Endothelial cell of umbilical vein (primary cell): ENCODE measurements at regions of chr1 and their contacts with region 1.

Region 1: GRCh38 chr1:220776720-220777326 is 9.9 kb upstream of the MTARC1 start:
- DNase-seq: peak; percentile 68
- H3K4me3 ChIP-seq: no peak overlapping the region
- H3K27ac ChIP-seq: no peak overlapping the region
- H3K4me1 ChIP-seq: no peaks in the 10 kb centered on the region
- H3K27me3 ChIP-seq: no peaks in the 10 kb centered on the region
- CTCF ChIP-seq: peak; percentile 91 to 94
- POLR2A ChIP-seq: no peak

Region 2: GRCh38 chr1:219990782-219991510 is 785.9 kb before region 1 on chr1:
- CTCF ChIA-PET with region 1: interaction called, 6 read pairs
- POLR2A ChIA-PET with region 1: no interaction called
- dilution Hi-C with region 1: no loop called
- intact Hi-C with region 1: loop called (anchors 5 kb)
- DNase-seq: peak; percentile 58
- H3K4me3 ChIP-seq: no peak overlapping the region
- H3K27ac ChIP-seq: no peak overlapping the region
- H3K4me1 ChIP-seq: no peaks in the 10 kb centered on the region
- H3K27me3 ChIP-seq: no peaks in the 10 kb centered on the region
- CTCF ChIP-seq: peak; percentile 31 to 47
- POLR2A ChIP-seq: no peak

Region 3: GRCh38 chr1:220272047-220272840 is 504.6 kb before region 1 on chr1 and contains the start of gene RAB3GAP2:
- CTCF ChIA-PET with region 1: interaction called, 58 read pairs
- POLR2A ChIA-PET with region 1: no interaction called
- dilution Hi-C with region 1: no loop called
- intact Hi-C with region 1: loop called (anchors 2 kb)
- DNase-seq: peak; percentile 95
- H3K4me3 ChIP-seq: peak within 1 kb of the TSS; percentile 63 to 75 (median 63)
- H3K27ac ChIP-seq: peak within 1 kb of the TSS; percentile 72
- H3K4me1 ChIP-seq: peaks cover 14% of the 10 kb centered on the region
- H3K27me3 ChIP-seq: peaks cover 7 to 14% of the 10 kb centered on the region in 2 experiments
- CTCF ChIP-seq: no peak
- POLR2A ChIP-seq: peak; percentile 91
- total RNA-seq, gene RAB3GAP2: 37.0 and 37.4 TPM in 2 replicates

Region 4: DNA sequence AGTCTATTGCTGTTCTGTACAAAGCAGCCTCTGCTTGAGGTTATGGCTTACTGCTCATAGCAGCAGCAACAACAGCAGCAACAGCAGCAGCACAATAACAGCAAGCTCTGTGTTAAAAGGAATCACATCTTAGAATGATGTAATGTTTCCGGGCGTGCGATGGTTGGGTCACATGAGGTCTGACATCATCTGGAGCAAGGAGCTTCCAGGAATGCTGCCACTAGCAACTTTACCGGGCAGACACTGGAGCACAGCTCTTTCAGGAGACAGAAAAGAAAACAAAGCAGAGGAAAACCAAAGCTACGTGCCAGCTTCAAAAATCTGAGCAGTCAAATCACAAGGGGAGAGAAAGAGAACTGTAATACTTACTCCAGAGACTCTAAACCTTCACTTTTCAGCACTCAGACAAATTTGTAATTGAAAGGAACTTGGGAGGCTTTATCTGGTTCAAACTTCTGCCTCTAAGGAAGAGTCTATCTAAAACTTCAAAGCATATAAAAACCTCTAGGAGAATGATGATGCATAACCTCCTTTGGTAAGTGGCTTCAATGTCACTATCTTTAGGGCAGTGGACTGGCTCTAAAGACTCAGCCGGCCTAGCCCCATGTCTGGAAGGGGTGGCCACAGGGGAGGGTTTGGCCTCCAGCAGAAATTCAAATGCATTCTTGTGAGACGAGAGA is 476.2 kb before region 1 on chr1:
- CTCF ChIA-PET with region 1: interaction called, 64 read pairs
- POLR2A ChIA-PET with region 1: no interaction called
- dilution Hi-C with region 1: no loop called
- intact Hi-C with region 1: loop called (anchors 1 kb)
- DNase-seq: peak; percentile 95
- H3K4me3 ChIP-seq: no peak overlapping the region
- H3K27ac ChIP-seq: peak overlapping the region; percentile 82
- H3K4me1 ChIP-seq: peaks cover 12% of the 10 kb centered on the region
- H3K27me3 ChIP-seq: peaks cover 3 to 5% of the 10 kb centered on the region in 2 experiments
- CTCF ChIP-seq: no peak
- POLR2A ChIP-seq: no peak

Region 5: DNA sequence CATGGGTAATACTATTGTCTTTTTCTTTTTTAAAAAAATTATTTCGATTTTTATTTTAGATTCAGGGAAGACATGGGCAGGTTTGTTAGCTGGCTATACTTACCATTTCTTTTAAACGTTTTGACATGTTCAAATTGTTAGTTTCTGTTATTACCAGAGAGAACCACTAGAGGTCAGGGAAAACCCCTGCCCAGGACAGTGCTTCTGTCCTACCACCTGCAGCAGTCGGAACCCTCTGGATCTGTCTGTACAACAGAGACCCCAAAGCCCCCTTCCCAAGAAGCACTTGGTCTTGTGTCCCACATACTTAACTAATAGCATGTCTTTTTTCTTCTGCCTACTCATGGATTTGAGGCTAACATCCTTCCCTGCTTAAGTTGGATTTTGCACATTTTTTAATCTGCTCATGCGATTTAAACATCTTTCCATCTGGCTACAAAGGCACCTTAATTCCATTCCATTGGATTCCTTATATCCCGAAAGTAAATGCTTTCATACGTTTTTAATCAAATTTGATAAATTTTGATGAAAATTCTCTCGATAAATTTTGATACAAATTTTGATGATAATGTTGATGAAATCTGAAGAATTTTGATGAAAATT is 96.6 kb before region 1 on chr1:
- CTCF ChIA-PET with region 1: interaction called, 26 read pairs
- POLR2A ChIA-PET with region 1: no interaction called
- dilution Hi-C with region 1: no loop called
- intact Hi-C with region 1: loop called (anchors 1 kb)
- DNase-seq: peak; percentile 70
- H3K4me3 ChIP-seq: no peak overlapping the region
- H3K27ac ChIP-seq: no peak overlapping the region
- H3K4me1 ChIP-seq: no peaks in the 10 kb centered on the region
- H3K27me3 ChIP-seq: no peaks in the 10 kb centered on the region
- CTCF ChIP-seq: peak; percentile 60 to 64
- POLR2A ChIP-seq: no peak

Region 6: DNA sequence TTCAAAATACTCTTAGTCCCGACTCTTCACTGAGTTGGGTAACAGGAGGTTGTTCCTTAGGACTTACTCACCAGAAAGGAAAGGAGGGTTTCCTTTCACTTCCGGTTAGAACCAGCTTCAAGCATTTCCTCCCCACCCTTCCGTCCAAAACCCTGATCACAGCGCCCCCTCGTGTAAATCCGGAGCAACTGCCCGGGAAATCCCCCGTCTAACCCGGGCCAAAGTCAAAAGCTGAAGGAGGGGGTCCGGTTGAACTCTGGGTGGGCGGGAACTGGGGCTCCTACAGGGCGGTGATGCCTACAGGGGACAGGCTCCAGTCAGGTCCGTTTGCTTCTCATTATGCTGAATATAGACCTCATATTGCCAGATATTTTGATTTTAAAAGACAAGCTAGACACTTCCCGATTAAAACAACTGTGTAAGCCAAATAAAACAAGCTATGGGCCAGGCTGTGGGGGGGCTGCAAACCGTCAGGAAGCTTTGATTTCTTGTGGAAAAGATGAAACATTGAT is 43.7 kb before region 1 on chr1:
- CTCF ChIA-PET with region 1: interaction called, 62 read pairs
- POLR2A ChIA-PET with region 1: no interaction called
- dilution Hi-C with region 1: no loop called
- intact Hi-C with region 1: loop called (anchors 1 kb)
- DNase-seq: peak; percentile 92
- H3K4me3 ChIP-seq: peak overlapping the region in 1 of 3 experiments; percentile 47
- H3K27ac ChIP-seq: peak overlapping the region; percentile 96
- H3K4me1 ChIP-seq: peaks cover 32% of the 10 kb centered on the region
- H3K27me3 ChIP-seq: no peaks in the 10 kb centered on the region
- CTCF ChIP-seq: peak; percentile 84 to 85
- POLR2A ChIP-seq: no peak

Region 7: GRCh38 chr1:220803401-220804201 is 26.8 kb after region 1 on chr1:
- CTCF ChIA-PET with region 1: interaction called, 6 read pairs
- POLR2A ChIA-PET with region 1: no interaction called
- dilution Hi-C with region 1: no loop called
- intact Hi-C with region 1: loop called (anchors 1 kb)
- DNase-seq: peak; percentile 59
- H3K4me3 ChIP-seq: no peak overlapping the region
- H3K27ac ChIP-seq: no peak overlapping the region
- H3K4me1 ChIP-seq: no peaks in the 10 kb centered on the region
- H3K27me3 ChIP-seq: peaks cover 6 to 11% of the 10 kb centered on the region in 2 experiments
- CTCF ChIP-seq: peak; percentile 62 to 83
- POLR2A ChIP-seq: no peak